Activated CD4-positive, alpha-beta T cell treated with anti-CD3 and anti-CD28 coated beads for 36 hours (primary cell): ENCODE measurements at regions of chr22 and their contacts with region 1.

Region 1: GRCh38 chr22:35128637-35129036 is 62.7 kb downstream of the ISX start:
- DNase-seq: no peak
- ATAC-seq: peak; percentile 72
- H3K4me3 Mint-ChIP-seq: no peak overlapping the region
- H3K27ac Mint-ChIP-seq: no peak overlapping the region
- H3K4me1 Mint-ChIP-seq: no peaks in the 10 kb centered on the region
- H3K27me3 Mint-ChIP-seq: peaks cover 39% of the 10 kb centered on the region

Region 2: DNA sequence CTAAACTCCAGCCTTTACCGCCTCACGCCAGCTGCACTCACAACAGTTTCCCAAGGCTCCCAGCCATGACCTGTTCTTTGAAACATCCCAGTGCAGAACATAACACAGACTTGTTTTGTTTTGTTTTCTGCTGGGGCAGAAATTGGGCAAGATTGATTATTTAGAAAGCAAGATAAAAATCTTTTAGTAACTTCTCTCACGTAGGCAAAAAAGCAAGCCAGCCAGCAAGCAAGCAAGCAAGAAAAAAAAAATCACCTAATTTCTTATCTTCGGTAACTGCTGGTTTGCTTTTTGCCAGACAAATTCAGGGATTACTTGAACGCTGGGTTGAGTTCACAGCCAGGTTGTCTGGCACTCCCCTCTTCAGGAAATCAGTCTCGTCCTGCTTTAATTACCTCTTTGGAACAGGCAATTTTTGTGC is 540.8 kb before region 1 on chr22:
- CTCF ChIA-PET with region 1: no interaction called
- POLR2A ChIA-PET with region 1: no interaction called
- intact Hi-C with region 1: no loop called
- DNase-seq: no peak
- ATAC-seq: no peak
- H3K4me3 Mint-ChIP-seq: no peak overlapping the region
- H3K27ac Mint-ChIP-seq: no peak overlapping the region
- H3K4me1 Mint-ChIP-seq: no peaks in the 10 kb centered on the region
- H3K27me3 Mint-ChIP-seq: no peaks in the 10 kb centered on the region

Region 3: GRCh38 chr22:35021161-35021560 is 107.5 kb before region 1 on chr22:
- CTCF ChIA-PET with region 1: no interaction called
- POLR2A ChIA-PET with region 1: no interaction called
- intact Hi-C with region 1: no loop called
- DNase-seq: no peak
- ATAC-seq: no peak
- H3K4me3 Mint-ChIP-seq: no peak overlapping the region
- H3K27ac Mint-ChIP-seq: no peak overlapping the region
- H3K4me1 Mint-ChIP-seq: no peaks in the 10 kb centered on the region
- H3K27me3 Mint-ChIP-seq: peaks cover 18% of the 10 kb centered on the region

Region 4: GRCh38 chr22:35051791-35052190 is 76.8 kb before region 1 on chr22:
- CTCF ChIA-PET with region 1: no interaction called
- POLR2A ChIA-PET with region 1: no interaction called
- intact Hi-C with region 1: loop called in 1 of 2 experiments (anchors 5 kb)
- DNase-seq: peak; percentile 17
- ATAC-seq: peak; percentile 88
- H3K4me3 Mint-ChIP-seq: no peak overlapping the region
- H3K27ac Mint-ChIP-seq: no peak overlapping the region
- H3K4me1 Mint-ChIP-seq: no peaks in the 10 kb centered on the region
- H3K27me3 Mint-ChIP-seq: peaks cover 15% of the 10 kb centered on the region

Region 5: DNA sequence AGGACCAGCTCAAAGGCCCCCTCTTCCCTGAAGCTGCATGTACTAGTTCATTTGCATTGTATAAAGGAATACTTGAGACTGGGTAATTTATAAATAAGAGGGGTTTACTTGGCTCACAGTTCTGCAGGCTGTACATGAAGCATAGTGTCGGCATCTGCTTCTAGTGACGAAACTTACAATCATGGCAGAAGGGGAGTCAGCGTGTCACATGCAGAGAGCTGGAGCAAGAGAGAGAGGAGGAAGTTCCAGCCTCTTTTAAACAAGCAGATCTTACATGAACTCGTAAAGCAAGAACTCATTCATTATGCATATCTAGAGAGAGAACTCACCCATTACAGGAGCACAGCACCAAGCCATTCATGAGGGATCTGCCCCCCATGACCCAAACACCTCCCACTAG is 121.5 kb after region 1 on chr22:
- CTCF ChIA-PET with region 1: no interaction called
- POLR2A ChIA-PET with region 1: no interaction called
- intact Hi-C with region 1: no loop called
- DNase-seq: no peak
- ATAC-seq: no peak
- H3K4me3 Mint-ChIP-seq: no peak overlapping the region
- H3K27ac Mint-ChIP-seq: no peak overlapping the region
- H3K4me1 Mint-ChIP-seq: peaks cover 3% of the 10 kb centered on the region
- H3K27me3 Mint-ChIP-seq: peaks cover 11% of the 10 kb centered on the region